IMR-90 (cell line): ENCODE measurements at regions of chr2 and their contacts with region 1.

Region 1: DNA sequence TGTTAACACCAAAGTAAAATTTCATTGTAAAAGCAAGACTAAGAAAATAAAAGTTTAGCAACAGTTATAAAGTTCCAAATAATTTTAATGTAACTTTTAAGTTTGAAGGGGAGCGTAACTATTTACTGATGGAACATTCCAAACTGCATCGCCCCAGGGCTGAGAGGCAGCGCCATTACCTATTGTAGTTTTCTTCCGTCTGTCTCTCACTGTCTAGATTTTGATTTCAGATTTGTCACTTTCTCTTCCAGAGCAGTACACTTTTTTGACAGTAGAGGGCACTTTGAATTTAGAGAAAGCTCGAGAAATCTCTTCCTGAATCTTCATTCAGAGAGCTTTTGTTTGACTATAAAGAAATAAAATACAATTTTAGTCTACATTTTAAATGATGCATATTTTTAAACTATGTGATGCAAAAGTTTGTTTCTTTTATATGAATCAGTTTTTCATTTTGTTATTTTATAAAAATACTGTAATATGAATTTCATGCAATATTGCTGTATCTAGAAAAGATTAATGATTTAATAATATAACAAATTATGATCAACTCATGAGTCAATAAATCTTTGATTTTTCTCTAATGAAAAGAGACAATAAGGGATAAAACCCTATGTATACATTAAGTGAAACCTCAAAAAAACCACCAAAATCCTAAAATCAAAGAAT is 389.8 kb downstream of the FIGN start:
- DNase-seq: peak; percentile 50
- ATAC-seq: no peak
- H3K4me3 ChIP-seq: no peak overlapping the region
- H3K27ac ChIP-seq: no peak overlapping the region
- H3K4me1 ChIP-seq: peaks cover 10% of the 10 kb centered on the region
- H3K27me3 ChIP-seq: no peaks in the 10 kb centered on the region
- CTCF ChIP-seq: peak; percentile 77
- POLR2A ChIP-seq: no peak
- RAD21 ChIP-seq: peak; percentile 66

Region 2: GRCh38 chr2:163155279-163155883 is 190.7 kb before region 1 on chr2:
- CTCF ChIA-PET with region 1: no interaction called
- POLR2A ChIA-PET with region 1: no interaction called
- dilution Hi-C with region 1: no loop called
- in situ Hi-C with region 1: no loop called
- intact Hi-C with region 1: loop called (anchors 5 kb)
- DNase-seq: peak; percentile 35
- ATAC-seq: peak; percentile 52
- H3K4me3 ChIP-seq: no peak overlapping the region
- H3K27ac ChIP-seq: no peak overlapping the region
- H3K4me1 ChIP-seq: peaks cover 8% of the 10 kb centered on the region
- H3K27me3 ChIP-seq: no peaks in the 10 kb centered on the region
- CTCF ChIP-seq: peak; percentile 73
- POLR2A ChIP-seq: no peak
- RAD21 ChIP-seq: peak; percentile 80

Region 3: GRCh38 chr2:163471947-163472346 is 125.9 kb after region 1 on chr2:
- CTCF ChIA-PET with region 1: no interaction called
- POLR2A ChIA-PET with region 1: no interaction called
- dilution Hi-C with region 1: no loop called
- in situ Hi-C with region 1: no loop called
- intact Hi-C with region 1: loop called (anchors 5 kb)
- DNase-seq: peak; percentile 3
- ATAC-seq: no peak
- H3K4me3 ChIP-seq: no peak overlapping the region
- H3K27ac ChIP-seq: no peak overlapping the region
- H3K4me1 ChIP-seq: no peaks in the 10 kb centered on the region
- H3K27me3 ChIP-seq: no peaks in the 10 kb centered on the region
- CTCF ChIP-seq: peak; percentile 38
- POLR2A ChIP-seq: no peak
- RAD21 ChIP-seq: peak; percentile 51

Region 4: GRCh38 chr2:163667064-163667887 is 321.2 kb after region 1 on chr2:
- CTCF ChIA-PET with region 1: no interaction called
- POLR2A ChIA-PET with region 1: no interaction called
- dilution Hi-C with region 1: no loop called
- in situ Hi-C with region 1: no loop called
- intact Hi-C with region 1: loop called (anchors 10 kb)
- DNase-seq: peak; percentile 94
- ATAC-seq: peak; percentile 92
- H3K4me3 ChIP-seq: no peak overlapping the region
- H3K27ac ChIP-seq: no peak overlapping the region
- H3K4me1 ChIP-seq: peaks cover 6% of the 10 kb centered on the region; the same call in 1 of the 2 replicates
- H3K27me3 ChIP-seq: no peaks in the 10 kb centered on the region
- CTCF ChIP-seq: no peak
- POLR2A ChIP-seq: no peak
- RAD21 ChIP-seq: no peak

Region 5: GRCh38 chr2:163878531-163879117 is 532.6 kb after region 1 on chr2:
- CTCF ChIA-PET with region 1: no interaction called
- POLR2A ChIA-PET with region 1: no interaction called
- dilution Hi-C with region 1: no loop called
- in situ Hi-C with region 1: no loop called
- intact Hi-C with region 1: loop called (anchors 1 kb)
- DNase-seq: peak; percentile 9
- ATAC-seq: peak; percentile 54; the same call in 1 of the 2 replicates
- H3K4me3 ChIP-seq: no peak overlapping the region
- H3K27ac ChIP-seq: no peak overlapping the region
- H3K4me1 ChIP-seq: no peaks in the 10 kb centered on the region
- H3K27me3 ChIP-seq: no peaks in the 10 kb centered on the region
- CTCF ChIP-seq: peak; percentile 54
- POLR2A ChIP-seq: no peak
- RAD21 ChIP-seq: peak; percentile 64

Region 6: GRCh38 chr2:164234074-164234473 is 888.0 kb after region 1 on chr2:
- CTCF ChIA-PET with region 1: no interaction called
- POLR2A ChIA-PET with region 1: no interaction called
- dilution Hi-C with region 1: no loop called
- in situ Hi-C with region 1: no loop called
- intact Hi-C with region 1: no loop called
- DNase-seq: no peak
- ATAC-seq: no peak
- H3K4me3 ChIP-seq: no peak overlapping the region
- H3K27ac ChIP-seq: no peak overlapping the region
- H3K4me1 ChIP-seq: no peaks in the 10 kb centered on the region
- H3K27me3 ChIP-seq: no peaks in the 10 kb centered on the region
- CTCF ChIP-seq: no peak
- POLR2A ChIP-seq: no peak
- RAD21 ChIP-seq: no peak

Region 7: GRCh38 chr2:164430166-164430783 is 1084.2 kb after region 1 on chr2:
- CTCF ChIA-PET with region 1: no interaction called
- POLR2A ChIA-PET with region 1: no interaction called
- dilution Hi-C with region 1: no loop called
- in situ Hi-C with region 1: no loop called
- intact Hi-C with region 1: loop called (anchors 2 kb)
- DNase-seq: peak; percentile 38
- ATAC-seq: 0 out of 2 replicates have a peak, but pooled peaks have one; percentile 63
- H3K4me3 ChIP-seq: no peak overlapping the region
- H3K27ac ChIP-seq: no peak overlapping the region
- H3K4me1 ChIP-seq: no peaks in the 10 kb centered on the region
- H3K27me3 ChIP-seq: no peaks in the 10 kb centered on the region
- CTCF ChIP-seq: peak; percentile 67
- POLR2A ChIP-seq: no peak
- RAD21 ChIP-seq: peak; percentile 66

Region 8: GRCh38 chr2:164538240-164538866 is 1192.3 kb after region 1 on chr2:
- CTCF ChIA-PET with region 1: no interaction called
- POLR2A ChIA-PET with region 1: no interaction called
- dilution Hi-C with region 1: no loop called
- in situ Hi-C with region 1: no loop called
- intact Hi-C with region 1: loop called (anchors 1 kb)
- DNase-seq: peak; percentile 29
- ATAC-seq: peak; percentile 82
- H3K4me3 ChIP-seq: no peak overlapping the region
- H3K27ac ChIP-seq: no peak overlapping the region
- H3K4me1 ChIP-seq: no peaks in the 10 kb centered on the region
- H3K27me3 ChIP-seq: no peaks in the 10 kb centered on the region
- CTCF ChIP-seq: peak; percentile 50
- POLR2A ChIP-seq: no peak
- RAD21 ChIP-seq: peak; percentile 48